Esophagus squamous epithelium (tissue), 5 donors: ENCODE measurements at regions of chr1 and their contacts with region 1.

Region 1: DNA sequence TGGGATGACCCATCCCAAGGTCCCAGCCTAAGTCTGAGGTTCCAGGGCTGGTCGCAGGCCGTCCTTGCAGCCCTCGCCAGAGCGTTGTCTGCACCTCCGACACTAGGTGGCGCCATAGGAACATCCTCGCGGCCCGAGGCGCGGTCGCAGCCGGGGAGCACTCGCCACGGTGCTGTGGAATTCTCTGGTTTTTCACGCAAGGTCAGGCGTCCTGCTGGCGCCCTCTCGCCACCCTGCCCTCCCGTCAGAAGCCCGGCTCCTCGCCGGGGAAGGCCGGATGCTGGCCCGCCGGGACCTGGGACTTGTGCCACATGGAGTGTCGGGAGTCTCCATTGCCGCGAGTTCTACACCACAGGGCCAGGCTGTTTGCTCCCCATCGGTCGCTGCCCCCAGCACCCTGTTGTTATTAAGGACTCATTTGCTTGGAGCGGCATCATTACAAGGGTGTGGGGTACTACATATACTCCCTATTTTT is 196.8 kb upstream of the LMO4 start:
- DNase-seq: no peak
- H3K4me3 ChIP-seq: peak overlapping the region; percentile 37 to 71 (median 48)
- H3K27ac ChIP-seq: peak overlapping the region; percentile 48 to 64 (median 55)
- H3K4me1 ChIP-seq: peaks cover 0 to 58% (median 12%) of the 10 kb centered on the region in 3 donors
- H3K27me3 ChIP-seq: peaks cover 0 to 7% (median 0%) of the 10 kb centered on the region in 4 donors
- CTCF ChIP-seq: peak; percentile 68 to 92 (median 78)
- POLR2A ChIP-seq: no peak

Region 2: DNA sequence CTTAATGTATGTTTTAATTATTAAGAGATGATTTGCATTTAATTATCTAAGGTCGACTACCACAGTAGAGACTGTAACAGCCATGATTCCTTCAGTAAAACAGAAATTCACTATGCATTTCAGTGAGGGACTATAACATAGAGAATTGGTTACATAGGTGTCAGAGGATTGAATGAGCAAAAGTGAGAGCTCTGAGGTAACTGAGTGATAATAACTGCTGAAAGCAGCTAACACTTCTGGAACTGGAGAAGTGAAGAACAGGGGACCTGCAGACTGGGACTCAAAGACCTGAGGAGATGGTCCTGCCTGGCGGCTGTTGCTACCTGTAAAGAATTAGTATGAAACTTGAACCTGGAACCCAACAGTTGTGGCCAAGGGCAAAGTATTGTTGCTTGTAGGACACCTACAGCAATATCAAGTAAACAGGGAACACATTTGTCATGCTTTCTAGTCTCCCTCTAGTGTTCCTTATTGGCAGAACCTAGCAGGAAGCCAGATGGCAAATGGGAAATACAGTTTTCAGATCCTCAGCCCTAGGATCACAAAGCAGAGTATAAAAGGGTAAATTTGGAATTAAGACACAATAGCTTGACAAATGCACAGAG is 106.8 kb before region 1 on chr1:
- intact Hi-C with region 1: no loop called
- DNase-seq: no peak
- H3K4me3 ChIP-seq: no peak overlapping the region
- H3K27ac ChIP-seq: no peak overlapping the region
- H3K4me1 ChIP-seq: peaks cover 0 to 14% (median 0%) of the 10 kb centered on the region in 3 donors
- H3K27me3 ChIP-seq: no peaks in the 10 kb centered on the region
- CTCF ChIP-seq: peak in 5 of 6 experiments; percentile 11 to 52 (median 17)
- POLR2A ChIP-seq: no peak

Region 3: GRCh38 chr1:87279966-87280535 is 148.2 kb after region 1 on chr1:
- intact Hi-C with region 1: loop called (anchors 10 kb)
- DNase-seq: no peak
- H3K4me3 ChIP-seq: no peak overlapping the region
- H3K27ac ChIP-seq: peak overlapping the region in 2 of 4 donors; percentile 53 to 59
- H3K4me1 ChIP-seq: peaks cover 0 to 4% (median 0%) of the 10 kb centered on the region in 3 donors
- H3K27me3 ChIP-seq: no peaks in the 10 kb centered on the region
- CTCF ChIP-seq: peak in 1 of 6 experiments; percentile 24
- POLR2A ChIP-seq: no peak